ENCODE measurements at regions of chr1 and their contacts with region 1.

Region 1: DNA sequence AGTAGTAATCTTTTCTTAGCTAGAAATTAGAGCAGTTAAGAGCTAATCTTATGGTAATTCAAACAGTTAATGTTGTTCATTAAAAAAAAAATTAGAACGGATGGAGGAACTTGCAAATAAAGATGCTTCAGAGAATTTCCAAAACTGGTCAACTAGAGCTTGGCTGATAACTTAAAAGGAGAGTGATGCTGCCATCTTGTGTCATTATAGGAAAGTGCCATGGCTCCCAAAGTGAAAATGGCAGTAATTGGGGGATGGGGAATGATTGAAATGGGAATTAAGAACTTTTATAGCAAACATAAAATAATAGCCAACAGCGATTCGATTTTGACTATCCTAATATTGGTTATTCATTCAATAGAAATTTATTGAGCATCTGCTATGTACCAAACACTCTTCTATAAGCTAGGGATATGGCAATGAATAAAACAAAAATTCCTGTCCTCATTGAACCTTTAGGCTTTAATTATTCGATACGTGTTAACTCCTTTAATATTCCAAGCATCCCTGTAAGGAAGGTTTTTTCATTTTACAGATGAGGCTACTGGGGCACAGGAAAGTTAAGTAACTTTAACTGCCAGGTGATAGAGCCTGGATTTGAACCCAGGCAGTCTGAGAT is 5.7 kb upstream of the PLPP3 start:
- DNase-seq: peak; percentile 60
- H3K4me3 Mint-ChIP-seq: no peak overlapping the region
- H3K27ac Mint-ChIP-seq: no peak overlapping the region
- H3K4me1 Mint-ChIP-seq: no peaks in the 10 kb centered on the region
- H3K27me3 Mint-ChIP-seq: peaks cover 9% of the 10 kb centered on the region

Region 2: DNA sequence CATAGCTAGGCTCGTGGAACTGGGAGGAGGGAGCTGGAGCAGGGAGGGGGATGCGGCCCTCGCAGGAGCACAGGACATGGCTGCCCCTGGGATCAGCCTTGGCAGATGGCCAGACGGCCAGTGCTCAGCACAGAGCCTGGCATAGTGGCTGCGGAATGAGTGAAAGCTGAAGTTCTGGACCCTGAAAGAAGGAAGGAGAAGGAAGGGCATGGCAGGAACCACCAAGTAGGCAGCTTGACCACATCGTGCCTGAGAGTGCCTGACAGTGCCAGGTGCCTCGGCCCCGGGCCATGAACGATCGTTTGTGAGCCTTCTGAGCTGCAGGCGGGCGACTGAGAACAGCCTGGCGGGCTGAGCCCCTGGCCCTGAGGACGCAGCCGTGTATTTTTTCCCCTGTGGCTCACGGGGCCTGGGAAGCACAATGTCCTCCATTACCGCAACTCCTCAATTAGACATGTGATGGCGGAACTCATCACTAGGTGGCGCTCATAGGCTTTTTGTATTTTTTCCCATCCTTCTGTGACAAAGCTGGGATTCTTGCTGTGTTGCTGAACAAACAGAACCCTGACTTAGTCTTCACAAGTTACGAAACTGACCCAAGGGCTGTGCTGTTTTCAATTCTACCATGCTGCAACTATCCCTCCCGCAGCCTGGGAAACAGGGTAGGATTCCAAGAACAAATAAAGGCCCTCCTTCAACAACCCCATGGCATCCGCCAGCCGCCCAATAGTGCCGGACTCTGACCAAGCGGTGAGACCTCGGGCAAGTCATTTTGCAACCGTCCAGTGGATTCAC is 1634.5 kb before region 1 on chr1:
- intact Hi-C with region 1: loop called (anchors 5 kb)
- DNase-seq: peak; percentile 88
- H3K4me3 Mint-ChIP-seq: no peak overlapping the region
- H3K27ac Mint-ChIP-seq: no peak overlapping the region
- H3K4me1 Mint-ChIP-seq: peaks cover 13% of the 10 kb centered on the region
- H3K27me3 Mint-ChIP-seq: peaks cover 3% of the 10 kb centered on the region

Region 3: DNA sequence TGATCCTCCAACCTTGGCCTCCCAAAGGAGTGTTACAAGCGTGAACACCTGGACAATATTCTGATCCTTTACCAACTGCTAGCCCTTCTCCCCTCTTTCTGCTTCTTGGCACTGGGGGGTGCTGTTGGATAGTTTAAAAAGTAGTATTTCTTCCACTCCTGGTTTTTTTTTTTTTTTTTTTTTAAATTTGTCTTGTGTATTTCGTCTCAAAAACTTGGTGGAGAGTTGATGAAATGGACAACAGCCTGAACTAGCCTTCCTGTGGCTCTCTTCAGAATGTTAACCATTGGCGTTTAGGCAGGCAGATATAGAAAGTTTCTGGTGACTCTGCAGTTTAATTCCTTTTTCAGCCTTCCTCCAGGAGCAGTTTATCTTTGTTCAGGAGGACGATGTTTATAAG is 1300.2 kb before region 1 on chr1:
- intact Hi-C with region 1: loop called (anchors 5 kb)
- DNase-seq: peak; percentile 63
- H3K4me3 Mint-ChIP-seq: no peak overlapping the region
- H3K27ac Mint-ChIP-seq: no peak overlapping the region
- H3K4me1 Mint-ChIP-seq: peaks cover 14% of the 10 kb centered on the region
- H3K27me3 Mint-ChIP-seq: peaks cover 9% of the 10 kb centered on the region

Region 4: DNA sequence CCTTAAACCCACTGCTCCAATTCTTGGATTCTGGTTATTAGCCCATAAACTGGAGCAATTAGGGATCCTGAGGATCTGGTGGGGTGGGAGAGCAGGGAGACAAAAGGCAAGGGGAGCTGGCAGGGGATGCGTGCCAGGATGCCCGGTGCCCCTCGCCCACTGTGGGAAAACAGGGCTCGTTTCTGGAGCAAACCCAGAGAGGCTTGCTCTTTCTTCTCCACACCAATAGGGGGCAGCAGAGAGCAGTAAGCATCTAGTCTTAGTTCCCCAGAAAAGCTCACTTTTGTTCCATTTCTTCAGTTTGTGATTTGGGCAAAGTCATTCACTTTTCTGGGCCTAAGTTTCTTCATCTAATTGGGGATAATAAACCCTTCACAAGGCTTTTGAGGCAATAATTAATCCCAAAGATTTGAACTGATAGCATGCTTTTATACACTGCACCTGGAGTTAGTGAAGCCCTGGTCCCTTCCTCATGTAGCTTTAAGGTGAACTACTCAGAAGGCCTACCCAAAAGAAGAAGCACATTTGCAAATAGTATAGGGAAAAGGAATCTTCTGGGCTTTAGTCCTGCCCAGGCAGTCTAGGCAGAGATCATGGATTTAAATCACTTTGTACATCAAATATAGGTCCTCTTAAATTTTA is 1209.3 kb before region 1 on chr1:
- intact Hi-C with region 1: loop called (anchors 10 kb)
- DNase-seq: peak; percentile 77
- H3K4me3 Mint-ChIP-seq: no peak overlapping the region
- H3K27ac Mint-ChIP-seq: no peak overlapping the region
- H3K4me1 Mint-ChIP-seq: peaks cover 10% of the 10 kb centered on the region
- H3K27me3 Mint-ChIP-seq: peaks cover 2% of the 10 kb centered on the region

Region 5: GRCh38 chr1:56424744-56425508 is 160.1 kb before region 1 on chr1:
- intact Hi-C with region 1: no loop called
- DNase-seq: no peak
- H3K4me3 Mint-ChIP-seq: no peak overlapping the region
- H3K27ac Mint-ChIP-seq: no peak overlapping the region
- H3K4me1 Mint-ChIP-seq: no peaks in the 10 kb centered on the region
- H3K27me3 Mint-ChIP-seq: no peaks in the 10 kb centered on the region

Region 6: GRCh38 chr1:56816909-56817308 is 231.9 kb after region 1 on chr1:
- intact Hi-C with region 1: no loop called
- DNase-seq: no peak
- H3K4me3 Mint-ChIP-seq: no peak overlapping the region
- H3K27ac Mint-ChIP-seq: no peak overlapping the region
- H3K4me1 Mint-ChIP-seq: no peaks in the 10 kb centered on the region
- H3K27me3 Mint-ChIP-seq: peaks cover 2% of the 10 kb centered on the region